ENCODE measurements at regions of chr11 and their contacts with region 1.

Region 1: DNA sequence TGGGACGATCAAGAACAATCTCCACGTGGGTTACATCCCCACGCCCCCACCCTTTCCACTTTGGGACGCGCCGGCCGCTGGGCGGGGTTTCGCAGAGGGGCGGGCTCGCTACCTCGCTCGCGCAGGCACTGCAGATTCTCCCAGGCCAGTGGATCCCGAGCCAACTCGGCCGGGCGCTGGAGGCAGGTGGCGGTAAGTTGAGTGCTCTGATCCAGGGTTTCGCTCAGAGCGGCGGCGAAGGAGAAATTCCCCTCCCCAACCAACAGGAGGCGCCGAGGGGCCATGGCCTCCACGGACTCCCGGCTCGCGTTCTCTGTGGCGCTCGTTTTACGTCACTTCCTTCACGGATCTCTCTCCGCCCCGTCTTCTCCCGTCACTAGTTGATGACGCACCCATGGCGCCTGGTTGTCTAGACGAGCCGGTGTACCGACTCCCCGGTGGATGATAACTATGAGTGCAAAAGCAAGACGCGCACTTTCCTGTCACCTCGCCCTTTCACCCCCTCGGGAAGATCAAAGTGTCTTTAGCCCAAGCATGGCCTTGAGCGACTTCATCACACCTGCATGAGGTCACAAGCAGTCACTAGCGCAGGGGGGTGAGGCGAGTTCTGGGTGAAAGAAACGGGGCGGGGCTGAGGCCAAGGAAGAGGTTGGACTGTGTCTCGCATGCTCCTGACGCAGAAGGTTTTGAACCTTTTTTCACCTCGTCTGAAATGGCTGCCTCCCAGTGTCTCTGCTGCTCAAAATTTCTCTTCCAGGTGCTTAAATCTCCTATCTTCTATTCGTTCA is at the starts of genes CFAP68 and FDXACB1:
- DNase-seq: peak; percentile 94 to 98
- ATAC-seq: peak; percentile 87 to 94 (median 87)
- H3K4me3 ChIP-seq: peak within 1 kb of the TSS; percentile 78
- H3K4me3 Mint-ChIP-seq: peak within 1 kb of the TSS; percentile 99
- H3K27ac ChIP-seq: peak within 1 kb of the TSS; percentile 99
- H3K27ac Mint-ChIP-seq: peak within 1 kb of the TSS; percentile 98 to 100
- H3K4me1 ChIP-seq: peaks cover 13% of the 10 kb centered on the region
- H3K4me1 Mint-ChIP-seq: peaks cover 19 to 24% of the 10 kb centered on the region in 2 donors
- H3K27me3 ChIP-seq: no peaks in the 10 kb centered on the region
- H3K27me3 Mint-ChIP-seq: no peaks in the 10 kb centered on the region
- CTCF ChIP-seq: peak; percentile 99
- total RNA-seq, gene CFAP68: 5.9 to 9.2 (median 7.6) TPM
- total RNA-seq, gene FDXACB1: 2.0 to 4.0 (median 3.3) TPM

Region 2: DNA sequence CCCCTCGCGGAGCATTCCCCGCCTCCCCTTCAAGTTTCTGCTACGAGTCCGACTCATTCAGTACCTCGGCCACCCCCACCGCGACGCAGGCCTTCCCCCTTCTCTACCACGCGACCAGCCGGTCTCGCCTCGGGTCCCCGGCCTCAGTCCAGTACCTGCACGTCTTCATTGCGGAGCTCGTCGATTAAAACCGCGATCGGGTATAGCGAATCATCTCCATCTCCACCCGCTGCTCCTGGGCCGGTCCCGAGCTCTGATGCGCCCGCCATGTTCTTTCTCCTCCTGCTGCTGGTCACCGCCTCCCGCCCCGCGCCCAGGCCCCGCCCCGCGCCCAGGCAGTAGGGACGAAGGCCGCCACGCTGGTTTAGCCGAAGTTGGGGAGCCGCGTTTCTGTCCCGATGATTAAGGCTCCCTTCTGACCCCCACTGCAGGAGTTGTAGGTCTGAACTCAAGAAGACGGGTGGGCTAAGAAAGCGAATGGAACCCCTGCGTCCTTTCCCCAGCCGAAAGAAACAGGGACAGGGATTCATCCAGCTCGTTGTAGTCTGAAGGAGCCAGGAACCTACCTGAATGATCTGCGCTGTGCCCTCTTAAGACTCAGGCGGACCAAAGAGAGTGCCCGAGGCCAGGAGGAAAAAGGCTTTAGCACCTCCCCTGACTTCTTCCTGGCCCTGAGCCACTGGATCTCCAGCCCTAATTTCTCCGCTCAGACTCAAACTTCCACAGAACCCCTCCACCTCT is 112.8 kb before region 1 on chr11 and contains the start of gene PPP2R1B:
- intact Hi-C with region 1: loop called (anchors 2 kb)
- DNase-seq: peak; percentile 65 to 82
- ATAC-seq: peak; percentile 98
- H3K4me3 ChIP-seq: peak within 1 kb of the TSS; percentile 93
- H3K4me3 Mint-ChIP-seq: peak within 1 kb of the TSS; percentile 100
- H3K27ac ChIP-seq: peak within 1 kb of the TSS; percentile 65
- H3K27ac Mint-ChIP-seq: peak within 1 kb of the TSS; percentile 77 to 83
- H3K4me1 ChIP-seq: peaks cover 7% of the 10 kb centered on the region
- H3K4me1 Mint-ChIP-seq: peaks cover 31 to 36% of the 10 kb centered on the region in 2 donors
- H3K27me3 ChIP-seq: no peaks in the 10 kb centered on the region
- H3K27me3 Mint-ChIP-seq: no peaks in the 10 kb centered on the region
- CTCF ChIP-seq: no peak
- total RNA-seq, gene PPP2R1B: 32.6 to 41.4 (median 40.8) TPM

Region 3: DNA sequence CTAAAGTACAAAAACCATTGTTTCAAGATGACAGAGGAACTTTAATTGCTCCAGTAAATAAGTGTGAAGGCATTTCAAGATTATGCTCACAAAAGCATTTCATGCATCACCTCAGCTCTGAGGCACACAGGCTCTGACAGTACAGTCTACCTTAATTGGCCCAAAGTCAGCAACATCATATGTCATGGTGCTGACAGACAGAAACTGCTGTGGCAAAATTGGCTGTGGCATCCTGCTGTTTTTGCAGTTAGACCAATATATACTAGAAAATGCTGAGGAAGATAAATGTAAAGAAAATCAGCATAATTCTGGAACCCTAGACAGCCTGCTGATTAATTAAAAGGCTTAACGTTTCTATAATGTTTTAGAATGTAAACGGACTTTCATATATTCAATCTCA is 77.9 kb before region 1 on chr11:
- intact Hi-C with region 1: no loop called
- DNase-seq: no peak
- ATAC-seq: no peak
- H3K4me3 ChIP-seq: no peak overlapping the region
- H3K4me3 Mint-ChIP-seq: no peak overlapping the region
- H3K27ac ChIP-seq: no peak overlapping the region
- H3K27ac Mint-ChIP-seq: no peak overlapping the region
- H3K4me1 ChIP-seq: no peaks in the 10 kb centered on the region
- H3K4me1 Mint-ChIP-seq: no peaks in the 10 kb centered on the region
- H3K27me3 ChIP-seq: no peaks in the 10 kb centered on the region
- H3K27me3 Mint-ChIP-seq: no peaks in the 10 kb centered on the region
- CTCF ChIP-seq: no peak

Region 4: DNA sequence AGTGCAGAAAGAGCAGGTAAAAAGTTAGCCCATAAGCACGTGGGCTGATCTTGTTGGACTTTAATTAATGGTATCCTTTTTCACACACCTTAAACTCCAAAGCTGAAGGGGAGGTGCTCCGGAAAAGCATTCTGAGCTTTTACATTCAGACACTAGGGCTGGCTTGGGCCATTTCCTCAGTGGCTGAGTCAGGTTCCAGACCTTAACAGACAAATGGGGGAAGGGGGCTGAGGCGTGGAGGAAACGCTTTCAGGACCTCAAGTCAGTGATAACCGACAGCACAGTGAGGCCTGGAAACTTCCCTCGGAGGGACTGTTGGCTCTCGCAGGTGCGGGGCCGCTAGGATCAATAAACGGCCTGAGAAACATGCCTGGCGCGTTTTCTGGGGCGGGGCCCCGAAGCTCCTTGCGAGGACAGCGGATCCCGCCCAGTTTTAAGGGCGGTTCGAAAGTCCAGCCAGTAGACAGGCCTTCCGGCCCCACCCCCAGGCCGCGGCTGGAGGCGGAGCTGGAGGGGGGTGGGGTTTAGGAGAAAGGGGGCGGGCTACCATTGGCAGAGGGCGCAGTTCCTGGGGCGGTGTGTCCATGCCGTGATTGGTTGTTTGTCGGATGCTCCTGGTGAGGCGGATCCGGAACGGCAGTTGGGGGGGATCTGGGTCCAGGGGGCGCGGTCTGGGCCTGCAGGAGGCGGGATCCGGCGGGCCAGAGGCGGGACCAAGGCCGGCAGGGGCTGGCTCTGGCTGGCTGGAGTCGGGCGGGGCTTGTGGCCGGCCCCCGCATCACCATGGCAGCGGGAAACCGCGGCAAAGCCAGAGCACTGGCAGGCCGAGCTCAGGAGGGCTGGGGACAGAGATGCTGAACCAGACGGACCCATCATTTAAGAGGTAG is 47.7 kb after region 1 on chr11:
- intact Hi-C with region 1: loop called (anchors 1 kb)
- DNase-seq: peak; percentile 96 to 97
- ATAC-seq: peak; percentile 88 to 96 (median 89)
- H3K4me3 ChIP-seq: peak overlapping the region; percentile 46
- H3K4me3 Mint-ChIP-seq: peak overlapping the region; percentile 88
- H3K27ac ChIP-seq: peak overlapping the region; percentile 82
- H3K27ac Mint-ChIP-seq: peak overlapping the region; percentile 79 to 94
- H3K4me1 ChIP-seq: peaks cover 15% of the 10 kb centered on the region
- H3K4me1 Mint-ChIP-seq: peaks cover 5 to 18% of the 10 kb centered on the region in 2 donors
- H3K27me3 ChIP-seq: no peaks in the 10 kb centered on the region
- H3K27me3 Mint-ChIP-seq: peaks cover 8 to 18% of the 10 kb centered on the region in 2 donors
- CTCF ChIP-seq: no peak

Region 5: GRCh38 chr11:111982019-111982464 is 103.0 kb after region 1 on chr11:
- intact Hi-C with region 1: loop called (anchors 1 kb)
- DNase-seq: peak in 1 of 2 donors; percentile 69
- ATAC-seq: peak; percentile 50 to 81 (median 64)
- H3K4me3 ChIP-seq: no peak overlapping the region
- H3K4me3 Mint-ChIP-seq: no peak overlapping the region
- H3K27ac ChIP-seq: no peak overlapping the region
- H3K27ac Mint-ChIP-seq: no peak overlapping the region
- H3K4me1 ChIP-seq: peaks cover 6% of the 10 kb centered on the region
- H3K4me1 Mint-ChIP-seq: peaks cover 0 to 7% of the 10 kb centered on the region in 2 donors
- H3K27me3 ChIP-seq: peaks cover 12% of the 10 kb centered on the region
- H3K27me3 Mint-ChIP-seq: peaks cover 19 to 22% of the 10 kb centered on the region in 2 donors
- CTCF ChIP-seq: peak; percentile 42

Region 6: GRCh38 chr11:112074026-112074811 is 195.2 kb after region 1 on chr11 and contains the start of gene NKAPD1:
- intact Hi-C with region 1: loop called (anchors 1 kb)
- DNase-seq: peak; percentile 79 to 92
- ATAC-seq: peak; percentile 90 to 93 (median 91)
- H3K4me3 ChIP-seq: peak within 1 kb of the TSS; percentile 97
- H3K4me3 Mint-ChIP-seq: peak within 1 kb of the TSS; percentile 94
- H3K27ac ChIP-seq: peak within 1 kb of the TSS; percentile 51
- H3K27ac Mint-ChIP-seq: peak within 1 kb of the TSS; percentile 95 to 96
- H3K4me1 ChIP-seq: peaks cover 6% of the 10 kb centered on the region
- H3K4me1 Mint-ChIP-seq: peaks cover 25 to 29% of the 10 kb centered on the region in 2 donors
- H3K27me3 ChIP-seq: peaks cover 2% of the 10 kb centered on the region
- H3K27me3 Mint-ChIP-seq: peaks cover 6 to 8% of the 10 kb centered on the region in 2 donors
- CTCF ChIP-seq: no peak
- total RNA-seq, gene NKAPD1: 12.6 to 14.9 (median 13.3) TPM

Region 7: DNA sequence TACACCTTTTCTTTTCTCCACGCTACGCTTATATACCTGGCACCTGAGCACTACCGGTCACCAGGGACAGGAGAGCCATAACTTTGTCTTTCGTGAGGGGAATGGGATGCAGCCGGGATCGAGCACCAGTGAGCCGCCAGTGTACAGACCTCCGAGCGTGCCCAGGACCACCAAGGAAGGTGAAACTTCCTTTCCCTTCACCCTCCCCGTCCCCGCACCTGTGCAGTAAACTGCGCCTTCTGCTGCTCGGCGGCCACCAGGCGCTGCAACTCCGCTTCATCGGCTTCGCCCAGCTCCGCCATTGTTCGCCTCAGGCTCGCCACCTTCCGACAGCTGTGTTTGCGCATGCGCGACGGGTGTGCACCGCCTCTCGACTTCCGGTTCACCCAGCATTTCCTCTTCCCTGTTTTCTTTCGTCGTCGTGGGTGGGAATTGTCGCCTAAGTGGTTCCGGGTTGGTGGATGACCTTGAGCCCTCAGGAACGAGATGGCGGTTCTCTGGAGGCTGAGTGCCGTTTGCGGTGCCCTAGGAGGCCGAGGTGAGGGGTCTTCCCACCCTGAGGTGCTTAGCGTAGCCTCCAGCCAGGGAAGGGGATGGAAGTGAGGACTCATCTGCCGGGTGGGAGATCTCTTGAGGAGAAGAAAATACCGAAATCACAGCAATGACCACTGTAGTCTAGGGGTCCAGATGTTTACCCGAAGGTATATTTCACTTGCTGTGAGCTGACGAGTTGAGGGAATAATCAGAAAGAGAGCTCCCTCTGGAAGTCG is 207.6 kb after region 1 on chr11 and contains the starts of genes SDHD and TIMM8B:
- intact Hi-C with region 1: loop called (anchors 1 kb)
- DNase-seq: peak; percentile 92 to 100
- ATAC-seq: peak; percentile 88 to 93 (median 90)
- H3K4me3 ChIP-seq: peak within 1 kb of the TSS; percentile 72
- H3K4me3 Mint-ChIP-seq: peak within 1 kb of the TSS; percentile 100
- H3K27ac ChIP-seq: peak within 1 kb of the TSS; percentile 69
- H3K27ac Mint-ChIP-seq: peak within 1 kb of the TSS; percentile 97 to 99
- H3K4me1 ChIP-seq: peaks cover 14% of the 10 kb centered on the region
- H3K4me1 Mint-ChIP-seq: peaks cover 46% of the 10 kb centered on the region in 2 donors
- H3K27me3 ChIP-seq: no peaks in the 10 kb centered on the region
- H3K27me3 Mint-ChIP-seq: no peaks in the 10 kb centered on the region
- CTCF ChIP-seq: peak; percentile 26
- total RNA-seq, gene SDHD: 46.8 to 55.0 (median 52.3) TPM
- total RNA-seq, gene TIMM8B: 14.6 to 17.8 (median 17.0) TPM